Cardiac septum (tissue), 1 donor: ENCODE measurements at regions of chr3 and their contacts with region 1.

Region 1: GRCh38 chr3:105366326-105367062 is at the start of gene ALCAM:
- DNase-seq: peak; percentile 95
- total RNA-seq, gene ALCAM: 8.3 TPM

Region 2: GRCh38 chr3:104273046-104273649 is 1093.3 kb before region 1 on chr3:
- intact Hi-C with region 1: loop called (anchors 10 kb)
- DNase-seq: no peak

Region 3: DNA sequence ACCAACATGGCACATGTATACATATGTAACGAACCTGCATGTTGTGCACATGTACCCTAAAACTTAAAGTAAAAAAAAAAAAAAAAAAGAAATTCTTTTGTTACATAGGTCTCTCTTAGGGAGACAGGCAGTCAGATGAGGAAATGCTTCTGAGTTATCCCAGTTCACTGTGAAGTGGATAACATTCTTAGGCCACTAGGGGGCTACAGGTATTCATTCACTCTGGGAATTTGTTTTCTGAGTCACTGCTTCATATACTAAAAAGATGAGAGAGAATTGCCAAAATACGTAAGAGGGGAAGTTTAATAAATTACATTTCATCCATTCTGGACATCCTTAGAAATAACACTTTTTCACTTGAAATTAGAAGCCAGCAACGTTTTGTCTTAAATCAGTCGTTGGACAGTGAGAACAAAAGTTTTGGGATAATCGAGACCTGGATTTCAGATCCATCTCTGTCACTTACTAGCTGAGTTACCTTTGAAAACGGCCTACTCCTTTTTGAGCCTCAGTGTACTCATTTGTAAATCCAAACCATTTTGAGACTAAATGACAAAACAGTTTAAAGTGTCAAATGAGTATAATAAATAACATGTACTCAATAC is 738.2 kb before region 1 on chr3:
- intact Hi-C with region 1: loop called (anchors 10 kb)
- DNase-seq: no peak

Region 4: GRCh38 chr3:105480768-105481167 is 114.3 kb after region 1 on chr3:
- intact Hi-C with region 1: no loop called
- DNase-seq: no peak

Region 5: DNA sequence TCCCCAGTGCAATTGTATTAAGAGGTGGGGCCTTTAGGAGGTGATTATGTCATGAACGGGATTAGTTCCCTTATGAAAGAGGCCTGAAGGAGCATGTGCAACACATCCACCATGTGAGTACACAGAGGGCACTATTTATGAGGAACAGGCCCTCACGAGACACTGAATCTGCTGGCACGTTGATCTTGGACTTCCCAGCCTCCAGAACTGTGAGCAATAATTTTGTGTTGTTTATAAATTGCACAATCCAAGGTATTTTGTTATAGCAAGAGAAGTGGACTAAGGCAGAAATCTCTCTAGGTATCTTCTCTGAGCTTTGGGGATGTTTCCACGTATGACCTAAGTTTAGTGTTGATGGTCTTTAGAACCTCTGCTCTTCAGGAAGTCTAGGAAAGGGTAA is 651.6 kb after region 1 on chr3:
- intact Hi-C with region 1: no loop called
- DNase-seq: no peak